Sciatic nerve (tissue), 2 donors: ENCODE measurements at regions of chr12 and their contacts with region 1.

Region 1: DNA sequence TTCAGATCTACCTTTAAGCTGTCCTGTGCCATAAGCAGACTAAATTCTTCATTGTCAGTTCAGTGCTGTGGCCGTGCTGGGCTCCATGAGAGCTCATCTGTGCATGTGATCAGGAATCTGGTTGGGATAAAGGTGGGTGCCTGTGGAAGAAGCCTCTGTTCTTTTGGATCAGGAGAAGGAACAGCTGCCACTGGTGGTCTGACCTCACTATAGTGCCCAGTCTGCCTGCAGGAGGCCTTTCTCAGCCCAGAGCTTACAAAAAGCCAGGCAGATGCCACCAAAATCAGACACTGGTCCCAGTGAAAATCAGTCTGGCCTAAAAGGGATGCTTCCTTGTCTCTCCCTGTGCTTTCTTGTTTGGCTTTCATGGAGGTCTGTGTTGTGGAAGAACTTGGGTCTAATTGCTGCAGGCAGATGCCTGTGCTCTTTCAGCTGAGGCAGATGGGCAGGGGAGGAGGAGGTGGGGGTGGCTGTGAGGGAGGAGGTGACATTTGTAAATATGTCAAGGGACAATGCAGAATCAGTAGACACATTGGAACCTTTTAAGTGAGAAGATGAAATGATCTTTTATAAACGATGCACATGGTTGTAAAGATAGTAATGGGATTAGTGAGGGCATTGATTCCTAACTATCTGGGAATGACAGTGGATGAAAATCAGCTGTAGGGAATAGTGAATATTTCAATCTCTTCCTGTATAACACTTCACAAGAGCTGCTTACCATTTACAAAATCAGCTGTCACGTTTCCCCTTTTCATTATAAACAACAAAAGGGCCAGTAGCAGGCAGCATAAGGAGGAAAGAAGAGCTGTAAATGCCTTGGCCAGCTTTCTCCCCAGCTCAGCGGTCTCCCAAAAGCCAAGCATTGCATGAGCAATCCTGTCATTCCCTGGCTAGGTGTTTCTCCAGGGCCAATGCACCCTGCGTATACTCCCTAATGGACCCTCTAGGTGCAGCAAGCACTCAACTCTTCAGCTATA is 44.6 kb downstream of the CACNA2D4 start:
- DNase-seq: no peak
- ATAC-seq: no peak

Region 2: GRCh38 chr12:1904875-1905274 is 31.1 kb after region 1 on chr12:
- intact Hi-C with region 1: loop called (anchors 2 kb)
- DNase-seq: no peak
- ATAC-seq: no peak